Activated CD8-positive, alpha-beta memory T cell treated with anti-CD3 and anti-CD28 coated beads, Interleukin-2, amount 10 ng/mL, durations not matched to agents 7 days and 5 days (primary cell): ENCODE measurements at regions of chr2 and their contacts with region 1.

Region 1: DNA sequence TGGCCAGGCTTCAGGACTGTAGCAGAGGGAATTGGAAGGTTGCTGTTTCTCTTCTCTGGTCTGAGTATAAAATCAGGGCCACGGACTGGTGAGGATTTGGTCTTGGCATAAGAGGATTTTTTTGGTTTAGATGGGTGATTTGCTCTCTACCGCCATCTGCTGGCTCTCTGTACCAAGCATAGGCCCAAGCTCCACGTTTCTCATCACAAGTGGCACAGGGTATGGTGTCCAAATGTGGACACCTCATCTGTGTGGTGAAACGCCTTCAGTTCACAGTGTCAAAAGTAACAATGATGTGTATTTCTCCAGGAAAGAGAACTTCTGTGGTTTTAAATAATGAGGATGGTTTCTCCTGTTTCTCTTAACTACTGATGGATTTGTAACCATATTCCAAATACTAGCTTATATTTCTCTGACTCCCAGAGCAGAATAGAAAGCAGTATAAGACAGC is 115.1 kb downstream of the EML6 start:
- DNase-seq: peak; percentile 72
- ATAC-seq: peak; percentile 76
- H3K4me3 Mint-ChIP-seq: no peak overlapping the region
- H3K27ac Mint-ChIP-seq: no peak overlapping the region
- H3K4me1 Mint-ChIP-seq: no peaks in the 10 kb centered on the region
- H3K27me3 Mint-ChIP-seq: no peaks in the 10 kb centered on the region

Region 2: DNA sequence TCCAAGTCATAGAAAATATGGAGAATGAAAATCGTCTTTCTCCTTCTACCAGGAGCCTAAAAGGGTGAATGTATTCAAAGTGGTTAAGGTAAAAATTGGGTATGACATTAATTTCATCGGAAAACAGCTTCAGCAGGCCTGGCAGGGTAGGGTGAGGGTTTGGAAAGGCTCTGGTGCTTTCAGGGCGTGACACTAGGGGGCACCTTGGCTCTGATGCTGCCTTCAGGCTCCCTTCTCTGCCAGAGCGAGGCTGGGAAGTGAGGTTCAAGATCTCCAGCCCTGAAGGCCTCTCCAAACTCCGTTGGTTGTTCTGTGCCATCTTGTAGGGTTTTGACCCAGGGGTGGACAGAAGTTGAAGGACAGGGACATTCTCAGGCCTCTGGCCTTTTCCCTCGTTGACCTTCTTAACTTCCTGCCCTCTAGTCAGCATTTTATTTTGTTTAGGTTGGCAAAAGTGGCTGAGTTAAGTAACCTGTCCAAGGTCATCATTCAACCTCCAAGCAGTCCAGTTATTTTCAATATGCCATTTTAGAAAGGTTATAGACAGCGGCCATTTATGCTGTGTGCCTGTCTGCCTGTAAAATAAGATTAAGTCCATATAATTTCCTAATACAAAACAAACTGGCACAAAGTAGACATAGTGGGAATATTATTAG is 74.8 kb before region 1 on chr2:
- CTCF ChIA-PET with region 1: interaction called, 18 read pairs
- DNase-seq: peak; percentile 46
- ATAC-seq: peak; percentile 60
- H3K4me3 Mint-ChIP-seq: no peak overlapping the region
- H3K27ac Mint-ChIP-seq: no peak overlapping the region
- H3K4me1 Mint-ChIP-seq: peaks cover 5% of the 10 kb centered on the region
- H3K27me3 Mint-ChIP-seq: peaks cover 6% of the 10 kb centered on the region

Region 3: GRCh38 chr2:54803783-54804751 is 34.5 kb before region 1 on chr2:
- CTCF ChIA-PET with region 1: no interaction called
- DNase-seq: no peak
- ATAC-seq: no peak
- H3K4me3 Mint-ChIP-seq: no peak overlapping the region
- H3K27ac Mint-ChIP-seq: no peak overlapping the region
- H3K4me1 Mint-ChIP-seq: peaks cover 4% of the 10 kb centered on the region
- H3K27me3 Mint-ChIP-seq: peaks cover 8% of the 10 kb centered on the region